Natural killer cell (primary cell): ENCODE measurements at regions of chr2 and their contacts with region 1.

Region 1: DNA sequence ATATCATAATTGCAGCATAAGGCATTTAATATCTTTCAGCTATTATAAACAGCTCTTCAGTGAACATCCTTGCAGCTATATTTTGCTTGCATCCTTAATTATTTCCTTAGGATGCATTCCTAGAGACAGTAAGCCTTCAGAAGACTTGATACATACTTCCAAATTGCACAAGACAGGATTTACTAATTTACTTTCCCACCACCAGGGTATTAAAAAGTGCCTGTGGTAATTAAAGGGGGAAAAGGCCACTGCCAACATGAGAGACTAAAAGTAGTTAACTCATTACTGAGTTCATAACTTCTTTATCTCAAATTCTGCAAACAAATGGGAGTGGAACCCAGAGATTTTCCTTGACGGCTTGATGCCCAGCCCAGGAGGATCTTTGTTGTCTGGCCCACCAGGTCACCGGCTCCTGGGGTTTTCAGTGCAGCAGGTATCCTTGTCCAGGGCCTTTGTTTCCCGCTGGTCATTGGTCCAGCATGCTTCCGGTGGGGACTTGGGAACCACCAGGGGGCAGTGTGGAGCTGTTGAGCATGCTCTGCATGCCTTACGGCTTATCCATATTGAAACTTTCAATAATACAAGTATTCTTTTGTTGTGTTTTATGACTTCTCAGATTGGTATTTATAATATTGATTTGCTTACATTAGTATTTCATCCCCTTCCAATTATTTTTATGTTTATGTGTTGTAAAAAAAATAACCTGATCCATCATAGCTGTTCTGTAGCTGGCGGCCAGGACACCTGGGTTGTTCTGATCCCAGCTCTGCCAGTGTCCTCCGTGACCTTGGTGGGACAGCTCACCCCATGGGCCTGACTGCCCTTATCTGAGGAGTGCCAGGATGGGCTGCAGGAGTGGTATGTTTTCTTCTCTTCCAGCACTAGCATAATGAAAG is 61.4 kb downstream of the TGOLN2 start:
- DNase-seq: peak; percentile 66 to 84
- ATAC-seq: peak; percentile 68 to 82 (median 73)
- H3K4me3 ChIP-seq: no peak overlapping the region
- H3K4me3 Mint-ChIP-seq: no peak overlapping the region
- H3K27ac ChIP-seq: no peak overlapping the region
- H3K27ac Mint-ChIP-seq: no peak overlapping the region
- H3K4me1 ChIP-seq: no peaks in the 10 kb centered on the region
- H3K4me1 Mint-ChIP-seq: no peaks in the 10 kb centered on the region
- H3K27me3 ChIP-seq: no peaks in the 10 kb centered on the region
- H3K27me3 Mint-ChIP-seq: peaks cover 22 to 30% of the 10 kb centered on the region in 2 donors
- CTCF ChIP-seq: peak; percentile 96

Region 2: GRCh38 chr2:85288244-85288725 is 21.9 kb after region 1 on chr2:
- intact Hi-C with region 1: loop called (anchors 1 kb)
- DNase-seq: no peak
- ATAC-seq: no peak
- H3K4me3 ChIP-seq: no peak overlapping the region
- H3K4me3 Mint-ChIP-seq: no peak overlapping the region
- H3K27ac ChIP-seq: no peak overlapping the region
- H3K27ac Mint-ChIP-seq: no peak overlapping the region
- H3K4me1 ChIP-seq: peaks cover 8% of the 10 kb centered on the region
- H3K4me1 Mint-ChIP-seq: peaks cover 11 to 16% of the 10 kb centered on the region in 2 donors
- H3K27me3 ChIP-seq: no peaks in the 10 kb centered on the region
- H3K27me3 Mint-ChIP-seq: peaks cover 0 to 5% of the 10 kb centered on the region in 2 donors
- CTCF ChIP-seq: no peak

Region 3: GRCh38 chr2:85302121-85302520 is 35.7 kb after region 1 on chr2:
- intact Hi-C with region 1: loop called (anchors 1 kb)
- DNase-seq: no peak
- ATAC-seq: no peak
- H3K4me3 ChIP-seq: no peak overlapping the region
- H3K4me3 Mint-ChIP-seq: no peak overlapping the region
- H3K27ac ChIP-seq: no peak overlapping the region
- H3K27ac Mint-ChIP-seq: no peak overlapping the region
- H3K4me1 ChIP-seq: peaks cover 8% of the 10 kb centered on the region
- H3K4me1 Mint-ChIP-seq: peaks cover 0 to 10% of the 10 kb centered on the region in 2 donors
- H3K27me3 ChIP-seq: no peaks in the 10 kb centered on the region
- H3K27me3 Mint-ChIP-seq: peaks cover 0 to 9% of the 10 kb centered on the region in 2 donors
- CTCF ChIP-seq: no peak

Region 4: GRCh38 chr2:85949280-85949679 is 682.9 kb after region 1 on chr2:
- intact Hi-C with region 1: no loop called
- DNase-seq: no peak
- ATAC-seq: no peak
- H3K4me3 ChIP-seq: no peak overlapping the region
- H3K4me3 Mint-ChIP-seq: no peak overlapping the region
- H3K27ac ChIP-seq: no peak overlapping the region
- H3K27ac Mint-ChIP-seq: no peak overlapping the region
- H3K4me1 ChIP-seq: no peaks in the 10 kb centered on the region
- H3K4me1 Mint-ChIP-seq: peaks cover 0 to 3% of the 10 kb centered on the region in 2 donors
- H3K27me3 ChIP-seq: no peaks in the 10 kb centered on the region
- H3K27me3 Mint-ChIP-seq: no peaks in the 10 kb centered on the region
- CTCF ChIP-seq: no peak